GM12878 (cell line): ENCODE measurements at regions of chr2 and their contacts with region 1.

Region 1: GRCh38 chr2:212990697-212991096 is 160.7 kb downstream of the IKZF2 start:
- DNase-seq: no peak
- ATAC-seq: peak; percentile 84
- H3K4me3 ChIP-seq: no peak overlapping the region
- H3K27ac ChIP-seq: peak overlapping the region; percentile 65
- H3K4me1 ChIP-seq: peaks cover 4% of the 10 kb centered on the region
- H3K27me3 ChIP-seq: no peaks in the 10 kb centered on the region
- CTCF ChIP-seq: no peak
- EP300 ChIP-seq: no peak
- POLR2A ChIP-seq: no peak
- RAD21 ChIP-seq: no peak

Region 2: DNA sequence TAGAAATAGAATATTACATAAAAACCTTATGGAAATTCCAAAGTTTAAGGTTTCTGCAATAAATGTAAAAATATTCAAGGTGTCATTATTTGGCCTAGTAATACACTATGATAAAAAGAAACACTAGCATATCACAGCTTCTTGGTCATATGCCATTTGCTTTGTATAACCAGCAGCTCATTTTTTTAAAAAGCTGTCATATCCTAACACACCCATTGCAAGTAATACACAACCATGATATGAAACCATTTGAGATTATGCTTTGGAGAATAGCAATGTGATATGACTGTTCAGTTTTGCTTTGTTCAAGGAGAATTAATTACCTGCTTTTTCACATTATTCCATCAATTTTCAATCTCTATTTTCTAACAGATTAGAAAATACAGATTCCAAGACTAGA is 11.7 kb after region 1 on chr2:
- CTCF ChIA-PET with region 1: no interaction called
- POLR2A ChIA-PET with region 1: no interaction called
- RAD21 ChIA-PET with region 1: no interaction called
- SMC1A ChIA-PET with region 1: interaction called, 13 read pairs
- in situ Hi-C with region 1: no loop called
- intact Hi-C with region 1: no loop called
- DNase-seq: no peak
- ATAC-seq: peak; percentile 55
- H3K4me3 ChIP-seq: no peak overlapping the region
- H3K27ac ChIP-seq: no peak overlapping the region
- H3K4me1 ChIP-seq: peaks cover 28% of the 10 kb centered on the region; the same call in 1 of the 2 replicates
- H3K27me3 ChIP-seq: no peaks in the 10 kb centered on the region
- CTCF ChIP-seq: no peak
- EP300 ChIP-seq: no peak
- POLR2A ChIP-seq: no peak
- RAD21 ChIP-seq: no peak

Region 3: GRCh38 chr2:214630402-214631045 is 1639.8 kb after region 1 on chr2:
- CTCF ChIA-PET with region 1: no interaction called
- POLR2A ChIA-PET with region 1: no interaction called
- RAD21 ChIA-PET with region 1: no interaction called
- SMC1A ChIA-PET with region 1: no interaction called
- in situ Hi-C with region 1: no loop called
- intact Hi-C with region 1: no loop called
- DNase-seq: no peak
- ATAC-seq: no peak
- H3K4me3 ChIP-seq: no peak overlapping the region
- H3K27ac ChIP-seq: no peak overlapping the region
- H3K4me1 ChIP-seq: no peaks in the 10 kb centered on the region
- H3K27me3 ChIP-seq: no peaks in the 10 kb centered on the region
- CTCF ChIP-seq: no peak
- EP300 ChIP-seq: no peak
- POLR2A ChIP-seq: no peak
- RAD21 ChIP-seq: no peak